ENCODE measurements at regions of chr4 and their contacts with region 1.

Region 1: GRCh38 chr4:101020956-101021355 is 326.4 kb downstream of the PPP3CA start:
- DNase-seq: peak; percentile 40 to 58 (median 47)
- H3K4me3 ChIP-seq: peak overlapping the region in 1 of 2 donors; percentile 37
- H3K4me3 Mint-ChIP-seq: peak overlapping the region; percentile 46 to 80 (median 72)
- H3K27ac ChIP-seq: peak overlapping the region; percentile 51
- H3K27ac Mint-ChIP-seq: peak overlapping the region; percentile 48 to 97 (median 89)
- H3K4me1 ChIP-seq: peaks cover 64% of the 10 kb centered on the region
- H3K4me1 Mint-ChIP-seq: peaks cover 39 to 71% (median 53%) of the 10 kb centered on the region in 4 donors
- H3K27me3 ChIP-seq: no peaks in the 10 kb centered on the region
- H3K27me3 Mint-ChIP-seq: no peaks in the 10 kb centered on the region

Region 2: GRCh38 chr4:100311171-100311570 is 709.8 kb before region 1 on chr4:
- CTCF ChIA-PET with region 1: no interaction called
- POLR2A ChIA-PET with region 1: no interaction called
- intact Hi-C with region 1: no loop called
- DNase-seq: no peak
- H3K4me3 ChIP-seq: no peak overlapping the region
- H3K4me3 Mint-ChIP-seq: no peak overlapping the region
- H3K27ac ChIP-seq: no peak overlapping the region
- H3K27ac Mint-ChIP-seq: no peak overlapping the region
- H3K4me1 ChIP-seq: no peaks in the 10 kb centered on the region
- H3K4me1 Mint-ChIP-seq: no peaks in the 10 kb centered on the region
- H3K27me3 ChIP-seq: no peaks in the 10 kb centered on the region
- H3K27me3 Mint-ChIP-seq: peaks cover 7 to 10% of the 10 kb centered on the region in 2 donors

Region 3: DNA sequence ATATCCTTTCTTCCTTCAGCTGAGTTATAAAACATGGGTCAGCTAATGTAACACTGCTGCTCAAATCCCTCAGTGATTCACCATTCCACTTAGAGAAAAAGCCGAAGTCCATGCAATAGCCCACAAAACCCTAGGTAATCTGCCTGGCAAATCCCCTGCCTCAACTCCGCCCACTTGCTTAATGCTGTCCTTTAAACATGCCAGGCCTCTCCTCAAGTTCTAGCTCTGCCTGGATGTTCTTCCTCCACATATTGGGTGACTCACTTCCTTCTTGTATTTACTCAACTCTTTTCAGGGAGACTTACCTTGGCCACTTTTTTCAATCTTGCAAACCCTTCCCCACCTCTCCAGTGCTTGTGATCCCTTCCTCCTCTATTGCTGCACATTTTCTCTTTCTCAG is 592.9 kb before region 1 on chr4:
- CTCF ChIA-PET with region 1: no interaction called
- POLR2A ChIA-PET with region 1: no interaction called
- intact Hi-C with region 1: no loop called
- DNase-seq: no peak
- H3K4me3 ChIP-seq: no peak overlapping the region
- H3K4me3 Mint-ChIP-seq: no peak overlapping the region
- H3K27ac ChIP-seq: no peak overlapping the region
- H3K27ac Mint-ChIP-seq: no peak overlapping the region
- H3K4me1 ChIP-seq: no peaks in the 10 kb centered on the region
- H3K4me1 Mint-ChIP-seq: peaks cover 0 to 3% (median 0%) of the 10 kb centered on the region in 4 donors
- H3K27me3 ChIP-seq: no peaks in the 10 kb centered on the region
- H3K27me3 Mint-ChIP-seq: no peaks in the 10 kb centered on the region

Region 4: GRCh38 chr4:100823066-100823992 is 197.6 kb before region 1 on chr4:
- CTCF ChIA-PET with region 1: no interaction called
- POLR2A ChIA-PET with region 1: no interaction called
- intact Hi-C with region 1: no loop called
- DNase-seq: no peak
- H3K4me3 ChIP-seq: no peak overlapping the region
- H3K4me3 Mint-ChIP-seq: no peak overlapping the region
- H3K27ac ChIP-seq: no peak overlapping the region
- H3K27ac Mint-ChIP-seq: no peak overlapping the region
- H3K4me1 ChIP-seq: no peaks in the 10 kb centered on the region
- H3K4me1 Mint-ChIP-seq: peaks cover 0 to 2% (median 0%) of the 10 kb centered on the region in 4 donors
- H3K27me3 ChIP-seq: no peaks in the 10 kb centered on the region
- H3K27me3 Mint-ChIP-seq: no peaks in the 10 kb centered on the region

Region 5: GRCh38 chr4:100895556-100896197 is 125.3 kb before region 1 on chr4:
- CTCF ChIA-PET with region 1: no interaction called
- POLR2A ChIA-PET with region 1: interaction called, 4 read pairs
- intact Hi-C with region 1: loop called (anchors 5 kb)
- DNase-seq: peak in 4 of 5 donors; percentile 36 to 45 (median 37)
- H3K4me3 ChIP-seq: peak overlapping the region; percentile 42 to 79
- H3K4me3 Mint-ChIP-seq: peak overlapping the region; percentile 81 to 93 (median 89)
- H3K27ac ChIP-seq: peak overlapping the region; percentile 40
- H3K27ac Mint-ChIP-seq: peak overlapping the region; percentile 71 to 97 (median 88)
- H3K4me1 ChIP-seq: peaks cover 11% of the 10 kb centered on the region
- H3K4me1 Mint-ChIP-seq: peaks cover 7 to 17% (median 14%) of the 10 kb centered on the region in 4 donors
- H3K27me3 ChIP-seq: no peaks in the 10 kb centered on the region
- H3K27me3 Mint-ChIP-seq: no peaks in the 10 kb centered on the region

Region 6: DNA sequence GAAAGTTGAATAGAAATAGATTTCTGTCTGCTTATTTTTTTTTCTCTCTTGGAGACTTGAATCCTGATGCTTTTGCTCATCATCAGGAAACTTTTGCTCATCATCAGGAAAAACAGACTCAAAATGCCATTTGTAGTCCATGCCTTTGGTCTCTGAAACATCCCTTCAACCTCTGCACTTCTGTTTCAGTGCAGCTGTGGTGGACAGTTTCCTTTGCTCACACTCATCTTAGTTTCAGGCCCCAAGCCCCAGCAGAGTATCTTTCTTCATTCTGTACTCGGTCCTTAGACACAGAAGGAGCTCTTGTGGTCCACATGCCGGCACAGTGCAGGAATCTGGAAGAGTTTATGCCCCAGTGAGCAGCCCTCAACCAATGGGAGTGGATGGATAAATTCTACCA is 11.5 kb before region 1 on chr4:
- CTCF ChIA-PET with region 1: interaction called, 8 read pairs
- POLR2A ChIA-PET with region 1: interaction called, 26 read pairs
- intact Hi-C with region 1: no loop called
- DNase-seq: no peak
- H3K4me3 ChIP-seq: no peak overlapping the region
- H3K4me3 Mint-ChIP-seq: peak overlapping the region in 6 of 8 donors; percentile 14 to 64 (median 45)
- H3K27ac ChIP-seq: no peak overlapping the region
- H3K27ac Mint-ChIP-seq: peak overlapping the region in 2 of 7 donors; percentile 26 to 48
- H3K4me1 ChIP-seq: peaks cover 27% of the 10 kb centered on the region
- H3K4me1 Mint-ChIP-seq: peaks cover 14 to 37% (median 19%) of the 10 kb centered on the region in 4 donors
- H3K27me3 ChIP-seq: no peaks in the 10 kb centered on the region
- H3K27me3 Mint-ChIP-seq: no peaks in the 10 kb centered on the region

Region 7: GRCh38 chr4:101050088-101050836 is 29.3 kb after region 1 on chr4:
- CTCF ChIA-PET with region 1: interaction called, 3 read pairs
- POLR2A ChIA-PET with region 1: interaction called, 10 read pairs
- intact Hi-C with region 1: no loop called
- DNase-seq: no peak
- H3K4me3 ChIP-seq: no peak overlapping the region
- H3K4me3 Mint-ChIP-seq: peak overlapping the region in 1 of 8 donors; percentile 47
- H3K27ac ChIP-seq: no peak overlapping the region
- H3K27ac Mint-ChIP-seq: no peak overlapping the region
- H3K4me1 ChIP-seq: no peaks in the 10 kb centered on the region
- H3K4me1 Mint-ChIP-seq: peaks cover 7 to 20% (median 11%) of the 10 kb centered on the region in 4 donors
- H3K27me3 ChIP-seq: no peaks in the 10 kb centered on the region
- H3K27me3 Mint-ChIP-seq: no peaks in the 10 kb centered on the region

Measured in CD4-positive, alpha-beta memory T cell (primary cell).